Sigmoid colon (tissue), 7 donors: ENCODE measurements at regions of chr6 and their contacts with region 1.

Region 1: DNA sequence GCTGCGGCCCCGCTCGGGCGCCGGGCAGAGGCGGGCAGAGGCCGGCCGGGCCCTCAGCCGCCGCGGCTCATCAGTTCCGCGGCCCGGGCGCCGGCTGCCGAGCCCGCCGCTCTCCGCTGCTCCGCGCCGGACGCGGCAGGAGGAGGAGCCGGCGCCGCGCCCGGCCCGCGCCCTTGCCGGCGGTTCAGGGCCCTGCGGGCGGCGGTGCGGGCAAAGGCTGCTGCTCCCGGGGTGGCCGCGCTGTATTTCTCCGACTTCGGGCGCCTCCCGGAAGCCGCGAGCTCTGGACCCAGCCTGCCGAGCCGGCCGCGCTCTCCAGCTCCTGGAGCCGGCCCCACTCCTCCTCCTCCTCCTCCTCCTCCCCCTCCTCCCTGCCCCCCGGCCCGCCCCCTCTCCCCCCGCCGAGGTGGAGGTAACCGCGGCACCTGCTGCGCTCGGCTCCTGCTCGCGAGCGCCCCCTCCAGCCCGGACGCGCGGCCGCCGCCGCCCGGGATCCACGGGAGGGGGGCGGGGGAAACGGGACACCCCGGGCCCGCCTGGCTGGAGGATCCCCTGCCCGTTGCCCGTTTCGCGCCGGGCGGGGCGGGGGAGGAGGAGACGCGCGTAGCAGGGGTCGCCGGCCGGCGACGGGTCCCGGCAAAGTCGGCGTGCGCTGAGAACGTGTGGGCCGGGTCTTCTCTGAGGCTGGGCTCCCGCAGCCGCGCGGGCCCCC is at the start of gene SLC22A23:
- DNase-seq: peak; percentile 78
- H3K4me3 ChIP-seq: peak within 1 kb of the TSS; percentile 54 to 73 (median 72)
- H3K27ac ChIP-seq: peak within 1 kb of the TSS; percentile 80 to 92 (median 84)
- H3K4me1 ChIP-seq: peaks cover 0 to 51% (median 29%) of the 10 kb centered on the region in 4 donors
- H3K27me3 ChIP-seq: no peaks in the 10 kb centered on the region
- CTCF ChIP-seq: peak in 2 of 4 experiments; percentile 34 to 91
- EP300 ChIP-seq: no peak
- POLR2A ChIP-seq: no peak
- total RNA-seq, gene SLC22A23: 8.1 to 16.9 (median 10.7) TPM

Region 2: GRCh38 chr6:3281631-3282475 is 175.1 kb before region 1 on chr6:
- intact Hi-C with region 1: loop called (anchors 2 kb)
- DNase-seq: peak; percentile 66
- H3K4me3 ChIP-seq: no peak overlapping the region
- H3K27ac ChIP-seq: peak overlapping the region; percentile 38 to 75 (median 71)
- H3K4me1 ChIP-seq: peaks cover 0 to 55% (median 40%) of the 10 kb centered on the region in 4 donors
- H3K27me3 ChIP-seq: no peaks in the 10 kb centered on the region
- CTCF ChIP-seq: no peak
- EP300 ChIP-seq: no peak
- POLR2A ChIP-seq: no peak

Region 3: DNA sequence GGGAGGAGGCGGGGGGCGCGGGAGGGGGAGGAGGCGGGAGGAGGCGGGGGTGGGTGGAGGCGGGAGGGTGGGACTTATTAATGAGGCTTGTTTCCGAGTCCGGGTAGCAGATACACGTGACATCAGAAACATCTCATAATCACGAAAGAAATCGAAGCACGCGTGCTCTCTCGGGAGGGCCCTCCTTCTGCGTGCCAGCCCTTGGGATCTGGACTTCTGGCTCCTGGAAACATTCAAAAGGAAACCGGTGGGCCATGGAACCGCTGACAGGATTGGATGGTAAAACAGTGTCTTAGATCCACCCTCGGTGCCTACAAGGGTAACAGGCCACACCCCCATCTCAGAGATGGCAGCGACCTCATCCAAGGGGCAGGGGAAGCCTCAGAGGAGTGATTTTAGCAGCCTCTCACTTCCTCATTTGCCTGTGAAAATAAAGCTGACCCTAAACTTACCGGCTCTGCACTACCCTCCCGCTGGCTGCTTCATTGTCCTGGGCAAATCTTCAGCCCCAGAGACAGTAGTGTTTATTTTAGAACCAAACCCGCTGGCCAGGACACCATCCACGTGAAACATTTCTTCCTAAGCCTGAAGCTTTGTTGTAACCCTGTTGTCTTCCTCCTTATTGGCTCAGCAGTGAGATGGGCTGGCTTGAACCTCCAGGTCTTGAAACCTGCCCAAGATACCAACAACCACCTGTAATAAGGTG is 100.7 kb before region 1 on chr6:
- intact Hi-C with region 1: loop called (anchors 5 kb)
- DNase-seq: peak; percentile 91
- H3K4me3 ChIP-seq: peak overlapping the region; percentile 24 to 46 (median 40)
- H3K27ac ChIP-seq: peak overlapping the region; percentile 87 to 94 (median 92)
- H3K4me1 ChIP-seq: peaks cover 0 to 46% (median 38%) of the 10 kb centered on the region in 4 donors
- H3K27me3 ChIP-seq: no peaks in the 10 kb centered on the region
- CTCF ChIP-seq: no peak
- EP300 ChIP-seq: peak in 1 of 4 donors; percentile 41
- POLR2A ChIP-seq: no peak

Region 4: DNA sequence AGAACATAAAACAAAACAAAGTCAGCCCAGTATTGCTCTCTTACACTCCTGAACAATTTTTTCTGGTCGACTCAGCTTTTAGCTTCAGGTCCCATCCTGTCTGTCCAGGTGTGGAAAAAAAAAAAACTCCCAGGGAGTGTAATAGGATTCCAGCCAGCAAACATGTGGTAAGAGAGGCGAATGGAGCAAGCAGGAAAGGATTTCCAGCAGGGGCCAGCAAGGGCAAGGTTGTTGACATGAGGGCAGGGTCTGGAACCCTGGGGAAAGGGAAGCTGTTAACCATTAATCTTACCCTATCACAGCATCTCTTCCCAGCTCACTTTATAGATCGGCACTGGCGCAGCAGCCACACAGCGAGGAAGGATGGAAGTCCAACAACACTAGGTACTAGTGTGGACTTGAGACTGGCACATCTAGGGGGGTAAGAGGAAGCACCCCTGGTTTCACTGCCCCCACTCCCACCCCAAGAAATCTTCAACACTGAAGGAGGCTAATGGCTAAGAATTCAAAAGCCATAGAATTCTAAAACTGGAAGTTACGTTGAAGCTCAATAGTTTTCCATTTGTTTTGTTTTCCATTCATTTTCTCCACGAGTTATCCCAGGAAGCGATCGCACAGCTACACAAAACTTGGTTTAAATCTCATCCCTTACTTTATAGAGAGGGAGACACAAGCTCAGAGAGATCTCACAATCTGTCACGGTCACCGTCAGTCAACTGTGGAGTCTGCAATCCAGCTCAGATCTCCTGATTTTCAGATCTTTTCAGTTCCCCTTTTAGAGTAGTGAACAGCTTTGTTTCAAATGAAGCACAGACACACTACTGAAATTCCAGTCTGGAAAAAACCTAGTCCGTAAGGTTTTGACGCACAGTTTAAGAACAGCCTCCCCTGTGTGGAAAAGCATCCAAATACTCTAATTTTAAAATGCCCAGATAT is 53.4 kb before region 1 on chr6:
- intact Hi-C with region 1: loop called (anchors 10 kb)
- DNase-seq: peak; percentile 58
- H3K4me3 ChIP-seq: no peak overlapping the region
- H3K27ac ChIP-seq: peak overlapping the region in 1 of 4 donors; percentile 30
- H3K4me1 ChIP-seq: peaks cover 0 to 39% (median 29%) of the 10 kb centered on the region in 4 donors
- H3K27me3 ChIP-seq: no peaks in the 10 kb centered on the region
- CTCF ChIP-seq: no peak
- EP300 ChIP-seq: no peak
- POLR2A ChIP-seq: no peak

Region 5: GRCh38 chr6:3612341-3613041 is 155.6 kb after region 1 on chr6:
- intact Hi-C with region 1: loop called (anchors 5 kb)
- DNase-seq: no peak
- H3K4me3 ChIP-seq: no peak overlapping the region
- H3K27ac ChIP-seq: peak overlapping the region; percentile 48 to 71 (median 62)
- H3K4me1 ChIP-seq: peaks cover 0 to 47% (median 25%) of the 10 kb centered on the region in 4 donors
- H3K27me3 ChIP-seq: no peaks in the 10 kb centered on the region
- CTCF ChIP-seq: no peak
- EP300 ChIP-seq: peak in 1 of 4 donors; percentile 34
- POLR2A ChIP-seq: no peak

Region 6: GRCh38 chr6:3664625-3665041 is 207.7 kb after region 1 on chr6:
- intact Hi-C with region 1: loop called (anchors 5 kb)
- DNase-seq: no peak
- H3K4me3 ChIP-seq: no peak overlapping the region
- H3K27ac ChIP-seq: peak overlapping the region; percentile 41 to 76 (median 66)
- H3K4me1 ChIP-seq: peaks cover 0 to 39% (median 23%) of the 10 kb centered on the region in 4 donors
- H3K27me3 ChIP-seq: no peaks in the 10 kb centered on the region
- CTCF ChIP-seq: no peak
- EP300 ChIP-seq: peak in 1 of 4 donors; percentile 47
- POLR2A ChIP-seq: no peak

Region 7: GRCh38 chr6:3732345-3733141 is 275.6 kb after region 1 on chr6:
- intact Hi-C with region 1: loop called (anchors 5 kb)
- DNase-seq: peak; percentile 89
- H3K4me3 ChIP-seq: no peak overlapping the region
- H3K27ac ChIP-seq: no peak overlapping the region
- H3K4me1 ChIP-seq: peaks cover 0 to 34% (median 22%) of the 10 kb centered on the region in 4 donors
- H3K27me3 ChIP-seq: no peaks in the 10 kb centered on the region
- CTCF ChIP-seq: peak; percentile 83 to 89 (median 86)
- EP300 ChIP-seq: no peak
- POLR2A ChIP-seq: no peak